ENCODE measurements at regions of chr17 and their contacts with region 1.

Region 1: DNA sequence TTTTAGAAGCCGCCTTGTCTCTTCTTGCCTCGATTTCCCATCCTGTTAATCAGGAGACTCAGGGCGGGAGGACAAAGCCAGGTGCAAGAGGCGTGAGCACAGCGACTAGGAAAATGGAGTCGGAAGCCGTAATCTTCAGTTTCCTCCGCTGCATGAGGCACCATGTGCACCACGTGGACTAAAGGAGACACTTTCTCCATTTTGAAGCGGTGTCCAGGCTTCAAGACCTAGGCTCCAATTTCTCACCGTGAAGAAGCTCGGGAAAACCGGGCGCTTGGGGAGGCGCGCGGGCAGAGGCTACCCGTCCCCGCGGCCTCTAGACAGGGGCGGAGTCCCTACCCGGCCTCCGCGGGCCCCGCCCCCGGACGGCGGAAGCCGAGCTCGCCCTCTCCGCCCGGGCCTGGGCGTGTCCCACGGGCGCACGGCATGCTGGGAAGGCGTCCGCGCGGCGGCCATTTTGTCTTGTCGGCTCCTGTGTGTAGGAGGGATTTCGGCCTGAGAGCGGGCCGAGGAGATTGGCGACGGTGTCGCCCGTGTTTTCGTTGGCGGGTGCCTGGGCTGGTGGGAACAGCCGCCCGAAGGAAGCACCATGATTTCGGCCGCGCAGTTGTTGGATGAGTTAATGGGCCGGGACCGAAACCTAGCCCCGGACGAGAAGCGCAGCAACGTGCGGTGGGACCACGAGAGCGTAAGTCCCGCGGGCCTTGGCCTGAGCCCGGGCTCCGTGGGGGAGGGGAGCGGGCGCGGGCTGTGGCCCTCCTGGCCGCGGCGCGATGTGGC is at the start of gene LUC7L3:
- DNase-seq: peak; percentile 96 to 97 (median 97)
- ATAC-seq: peak; percentile 92
- H3K4me3 ChIP-seq: peak within 1 kb of the TSS; percentile 87
- H3K27ac ChIP-seq: peak within 1 kb of the TSS; percentile 99
- H3K4me1 ChIP-seq: peaks cover 11 to 15% of the 10 kb centered on the region in 2 experiments; a peak in 4 of 5 replicates
- H3K27me3 ChIP-seq: no peaks in the 10 kb centered on the region
- CTCF ChIP-seq: peak in 1 of 3 experiments; percentile 3; a peak in 1 of 6 replicates
- EP300 ChIP-seq: peak; percentile 28; the same call in 1 of the 2 replicates
- POLR2A ChIP-seq: peak; percentile 98
- RAD21 ChIP-seq: no peak
- polyA plus RNA-seq, gene LUC7L3: 80.8 to 97.7 TPM

Region 2: GRCh38 chr17:50337987-50338386 is 381.3 kb before region 1 on chr17:
- CTCF ChIA-PET with region 1: no interaction called
- POLR2A ChIA-PET with region 1: no interaction called
- in situ Hi-C with region 1: no loop called
- intact Hi-C with region 1: no loop called
- DNase-seq: peak in 2 of 4 experiments; percentile 41 to 59
- ATAC-seq: peak; percentile 75
- H3K4me3 ChIP-seq: no peak overlapping the region
- H3K27ac ChIP-seq: no peak overlapping the region
- H3K4me1 ChIP-seq: no peaks in the 10 kb centered on the region; a peak in 2 of 5 replicates
- H3K27me3 ChIP-seq: peaks cover 0 to 9% of the 10 kb centered on the region in 2 experiments; a peak in 2 of 5 replicates
- CTCF ChIP-seq: no peak
- EP300 ChIP-seq: no peak
- POLR2A ChIP-seq: no peak
- RAD21 ChIP-seq: no peak

Region 3: GRCh38 chr17:50707289-50708049 is 11.9 kb before region 1 on chr17 and contains the start of gene ANKRD40:
- CTCF ChIA-PET with region 1: no interaction called
- POLR2A ChIA-PET with region 1: interaction called, 12 read pairs
- in situ Hi-C with region 1: no loop called
- intact Hi-C with region 1: no loop called
- DNase-seq: peak; percentile 87 to 93 (median 91)
- ATAC-seq: peak; percentile 83
- H3K4me3 ChIP-seq: peak within 1 kb of the TSS; percentile 56
- H3K27ac ChIP-seq: peak within 1 kb of the TSS; percentile 95
- H3K4me1 ChIP-seq: peaks cover 9 to 20% of the 10 kb centered on the region in 2 experiments; a peak in 3 of 5 replicates
- H3K27me3 ChIP-seq: no peaks in the 10 kb centered on the region
- CTCF ChIP-seq: no peak
- EP300 ChIP-seq: peak; percentile 75
- POLR2A ChIP-seq: peak; percentile 69
- RAD21 ChIP-seq: no peak
- polyA plus RNA-seq, gene ANKRD40: 9.0 to 9.9 TPM

Region 4: GRCh38 chr17:50731575-50732460 is 12.5 kb after region 1 on chr17:
- CTCF ChIA-PET with region 1: no interaction called
- POLR2A ChIA-PET with region 1: interaction called, 12 read pairs
- in situ Hi-C with region 1: no loop called
- intact Hi-C with region 1: no loop called
- DNase-seq: peak in 2 of 4 experiments; percentile 31 to 49
- ATAC-seq: peak; percentile 63
- H3K4me3 ChIP-seq: no peak overlapping the region
- H3K27ac ChIP-seq: peak overlapping the region; percentile 20; the same call in 1 of the 3 replicates
- H3K4me1 ChIP-seq: peaks cover 10 to 21% of the 10 kb centered on the region in 2 experiments; a peak in 4 of 5 replicates
- H3K27me3 ChIP-seq: no peaks in the 10 kb centered on the region
- CTCF ChIP-seq: no peak
- EP300 ChIP-seq: no peak
- POLR2A ChIP-seq: no peak
- RAD21 ChIP-seq: no peak

Region 5: GRCh38 chr17:50763716-50764475 is 44.6 kb after region 1 on chr17:
- CTCF ChIA-PET with region 1: no interaction called
- POLR2A ChIA-PET with region 1: interaction called, 3 read pairs
- in situ Hi-C with region 1: no loop called
- intact Hi-C with region 1: loop called (anchors 5 kb)
- DNase-seq: no peak
- ATAC-seq: no peak
- H3K4me3 ChIP-seq: no peak overlapping the region
- H3K27ac ChIP-seq: no peak overlapping the region
- H3K4me1 ChIP-seq: peaks cover 5 to 8% of the 10 kb centered on the region in 2 experiments; a peak in 3 of 5 replicates
- H3K27me3 ChIP-seq: no peaks in the 10 kb centered on the region
- CTCF ChIP-seq: no peak
- EP300 ChIP-seq: no peak
- POLR2A ChIP-seq: no peak
- RAD21 ChIP-seq: no peak

Region 6: DNA sequence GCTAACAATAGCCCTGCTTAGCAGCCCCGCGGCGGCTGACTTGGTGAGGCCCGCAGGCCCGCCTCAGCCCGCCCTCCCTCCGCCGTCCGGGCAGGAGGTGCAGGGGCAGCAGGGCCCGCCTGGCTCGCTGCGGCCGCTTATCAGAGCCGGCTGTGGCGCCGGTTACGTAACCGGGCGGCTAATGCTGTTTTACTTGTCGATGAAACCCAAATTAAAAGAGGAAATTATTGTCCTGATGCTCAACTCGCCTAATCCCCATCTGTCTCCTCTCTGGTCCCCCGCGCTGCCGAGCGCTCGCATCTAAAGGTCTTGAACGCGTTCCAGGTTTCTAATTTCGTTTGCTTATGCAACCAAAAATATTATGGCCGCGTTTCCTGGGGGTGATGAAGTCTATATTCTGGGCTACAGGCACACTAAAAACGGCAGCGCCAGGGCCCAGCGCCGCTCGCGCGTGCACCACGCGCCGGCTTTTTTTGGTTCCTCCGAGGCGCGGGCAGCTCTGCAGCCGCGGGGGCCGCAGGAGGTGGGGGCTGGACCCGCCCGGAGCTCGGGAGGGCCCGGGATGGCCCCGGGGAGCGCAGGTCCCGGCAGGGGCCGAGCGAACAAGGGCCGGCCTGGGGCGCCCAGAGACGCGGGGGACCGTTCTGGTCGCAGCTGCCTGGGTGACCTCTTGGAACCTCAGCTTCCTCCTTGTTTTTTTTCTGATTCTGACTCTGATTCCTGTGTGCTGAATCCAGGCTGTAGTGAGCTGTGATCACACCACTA is 212.0 kb after region 1 on chr17:
- CTCF ChIA-PET with region 1: no interaction called
- POLR2A ChIA-PET with region 1: no interaction called
- in situ Hi-C with region 1: no loop called
- intact Hi-C with region 1: loop called (anchors 10 kb)
- DNase-seq: peak; percentile 69 to 78 (median 72)
- ATAC-seq: peak; percentile 79
- H3K4me3 ChIP-seq: peak overlapping the region; percentile 28
- H3K27ac ChIP-seq: peak overlapping the region; percentile 48; the same call in 1 of the 3 replicates
- H3K4me1 ChIP-seq: peaks cover 40 to 48% of the 10 kb centered on the region in 2 experiments
- H3K27me3 ChIP-seq: no peaks in the 10 kb centered on the region
- CTCF ChIP-seq: no peak
- EP300 ChIP-seq: no peak
- POLR2A ChIP-seq: no peak
- RAD21 ChIP-seq: no peak

Region 7: DNA sequence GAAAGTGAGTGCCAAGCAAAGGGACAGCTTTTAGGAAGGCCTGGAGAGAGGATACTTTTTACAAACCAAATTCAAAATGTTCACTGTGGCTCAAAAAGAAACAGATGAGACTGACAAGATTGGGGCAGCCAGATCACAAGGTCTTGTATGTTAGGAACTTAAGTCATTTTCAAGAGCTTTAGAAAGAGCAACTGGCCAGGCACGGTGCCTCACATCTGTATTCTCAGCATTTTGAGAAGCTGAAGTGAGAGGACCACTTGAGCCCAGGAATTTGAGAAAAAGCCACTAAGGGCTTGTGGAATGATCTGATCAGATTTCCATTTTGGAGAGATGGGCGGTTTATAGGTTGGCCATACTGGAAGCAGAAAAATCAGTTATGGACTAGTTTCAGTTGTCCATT is 384.1 kb after region 1 on chr17:
- CTCF ChIA-PET with region 1: no interaction called
- POLR2A ChIA-PET with region 1: no interaction called
- in situ Hi-C with region 1: no loop called
- intact Hi-C with region 1: no loop called
- DNase-seq: no peak
- ATAC-seq: no peak
- H3K4me3 ChIP-seq: no peak overlapping the region
- H3K27ac ChIP-seq: no peak overlapping the region
- H3K4me1 ChIP-seq: no peaks in the 10 kb centered on the region; a peak in 1 of 5 replicates
- H3K27me3 ChIP-seq: no peaks in the 10 kb centered on the region
- CTCF ChIP-seq: no peak
- EP300 ChIP-seq: no peak
- POLR2A ChIP-seq: no peak
- RAD21 ChIP-seq: no peak